GM12878 (cell line): ENCODE measurements at regions of chr12 and their contacts with region 1.

Region 1: GRCh38 chr12:5442251-5443006 is 10.5 kb downstream of the NTF3 start:
- DNase-seq: no peak
- ATAC-seq: peak; percentile 81
- H3K4me3 ChIP-seq: no peak overlapping the region
- H3K27ac ChIP-seq: no peak overlapping the region
- H3K4me1 ChIP-seq: peaks cover 8% of the 10 kb centered on the region
- H3K27me3 ChIP-seq: no peaks in the 10 kb centered on the region; a peak in 1 of 4 replicates
- CTCF ChIP-seq: peak; percentile 24 to 53 (median 35); a peak in 4 of 6 replicates
- EP300 ChIP-seq: no peak
- POLR2A ChIP-seq: no peak
- RAD21 ChIP-seq: peak; percentile 49

Region 2: GRCh38 chr12:5022465-5023061 is 419.9 kb before region 1 on chr12:
- CTCF ChIA-PET with region 1: no interaction called
- POLR2A ChIA-PET with region 1: no interaction called
- RAD21 ChIA-PET with region 1: no interaction called
- SMC1A ChIA-PET with region 1: no interaction called
- in situ Hi-C with region 1: no loop called
- intact Hi-C with region 1: loop called (anchors 5 kb)
- DNase-seq: no peak
- ATAC-seq: peak; percentile 91
- H3K4me3 ChIP-seq: no peak overlapping the region
- H3K27ac ChIP-seq: no peak overlapping the region
- H3K4me1 ChIP-seq: no peaks in the 10 kb centered on the region
- H3K27me3 ChIP-seq: no peaks in the 10 kb centered on the region; a peak in 3 of 4 replicates
- CTCF ChIP-seq: peak; percentile 93 to 97 (median 95)
- EP300 ChIP-seq: no peak
- POLR2A ChIP-seq: no peak
- RAD21 ChIP-seq: peak; percentile 96

Region 3: GRCh38 chr12:5171701-5172100 is 270.7 kb before region 1 on chr12:
- CTCF ChIA-PET with region 1: interaction called, 3 read pairs
- POLR2A ChIA-PET with region 1: no interaction called
- RAD21 ChIA-PET with region 1: no interaction called
- SMC1A ChIA-PET with region 1: no interaction called
- in situ Hi-C with region 1: no loop called
- intact Hi-C with region 1: loop called (anchors 5 kb)
- DNase-seq: no peak
- ATAC-seq: no peak
- H3K4me3 ChIP-seq: no peak overlapping the region
- H3K27ac ChIP-seq: no peak overlapping the region
- H3K4me1 ChIP-seq: no peaks in the 10 kb centered on the region
- H3K27me3 ChIP-seq: peaks cover 0 to 4% of the 10 kb centered on the region in 2 experiments; a peak in 2 of 4 replicates
- CTCF ChIP-seq: peak; percentile 22 to 43 (median 34); a peak in 5 of 6 replicates
- EP300 ChIP-seq: no peak
- POLR2A ChIP-seq: no peak
- RAD21 ChIP-seq: peak; percentile 57

Region 4: GRCh38 chr12:5200278-5201087 is 241.9 kb before region 1 on chr12:
- CTCF ChIA-PET with region 1: no interaction called
- POLR2A ChIA-PET with region 1: interaction called, 8 read pairs
- RAD21 ChIA-PET with region 1: no interaction called
- SMC1A ChIA-PET with region 1: interaction called, 3 read pairs
- in situ Hi-C with region 1: no loop called
- intact Hi-C with region 1: loop called (anchors 1 kb)
- DNase-seq: no peak
- ATAC-seq: peak; percentile 77
- H3K4me3 ChIP-seq: no peak overlapping the region
- H3K27ac ChIP-seq: no peak overlapping the region
- H3K4me1 ChIP-seq: no peaks in the 10 kb centered on the region
- H3K27me3 ChIP-seq: peaks cover 2 to 4% of the 10 kb centered on the region in 2 experiments; a peak in 3 of 4 replicates
- CTCF ChIP-seq: peak; percentile 50 to 70 (median 54)
- EP300 ChIP-seq: no peak
- POLR2A ChIP-seq: no peak
- RAD21 ChIP-seq: peak; percentile 58